ENCODE measurements at regions of chr2 and their contacts with region 1.

Region 1: GRCh38 chr2:208698114-208698513 is 291.5 kb downstream of the PTH2R start:
- DNase-seq: no peak
- ATAC-seq: no peak
- H3K4me3 ChIP-seq: no peak overlapping the region
- H3K27ac ChIP-seq: no peak overlapping the region
- H3K4me1 ChIP-seq: no peaks in the 10 kb centered on the region
- H3K27me3 ChIP-seq: no peaks in the 10 kb centered on the region
- CTCF ChIP-seq: no peak

Region 2: GRCh38 chr2:208648368-208648767 is 49.7 kb before region 1 on chr2:
- intact Hi-C with region 1: loop called in 1 of 10 experiments (anchors 2 kb)
- DNase-seq: no peak
- ATAC-seq: no peak
- H3K4me3 ChIP-seq: no peak overlapping the region
- H3K27ac ChIP-seq: no peak overlapping the region
- H3K4me1 ChIP-seq: no peaks in the 10 kb centered on the region
- H3K27me3 ChIP-seq: no peaks in the 10 kb centered on the region
- CTCF ChIP-seq: no peak